ENCODE measurements at regions of chr22 and their contacts with region 1.

Region 1: GRCh38 chr22:31496007-31496734 is at the start of gene SFI1:
- DNase-seq: peak; percentile 96 to 97 (median 96)
- H3K4me3 ChIP-seq: peak within 1 kb of the TSS; percentile 93 to 96
- H3K4me3 Mint-ChIP-seq: peak within 1 kb of the TSS; percentile 87 to 98 (median 91)
- H3K27ac ChIP-seq: peak within 1 kb of the TSS; percentile 89
- H3K27ac Mint-ChIP-seq: peak within 1 kb of the TSS; percentile 94 to 98 (median 97)
- H3K4me1 ChIP-seq: peaks cover 60% of the 10 kb centered on the region
- H3K4me1 Mint-ChIP-seq: peaks cover 23 to 63% (median 32%) of the 10 kb centered on the region in 4 donors
- H3K27me3 ChIP-seq: no peaks in the 10 kb centered on the region
- H3K27me3 Mint-ChIP-seq: no peaks in the 10 kb centered on the region
- total RNA-seq, gene SFI1: 323 to 333 TPM

Region 2: GRCh38 chr22:30767661-30768060 is 728.5 kb before region 1 on chr22:
- CTCF ChIA-PET with region 1: no interaction called
- POLR2A ChIA-PET with region 1: no interaction called
- intact Hi-C with region 1: no loop called
- DNase-seq: no peak
- H3K4me3 ChIP-seq: no peak overlapping the region
- H3K4me3 Mint-ChIP-seq: no peak overlapping the region
- H3K27ac ChIP-seq: no peak overlapping the region
- H3K27ac Mint-ChIP-seq: no peak overlapping the region
- H3K4me1 ChIP-seq: no peaks in the 10 kb centered on the region
- H3K4me1 Mint-ChIP-seq: no peaks in the 10 kb centered on the region
- H3K27me3 ChIP-seq: no peaks in the 10 kb centered on the region
- H3K27me3 Mint-ChIP-seq: no peaks in the 10 kb centered on the region

Region 3: GRCh38 chr22:31399211-31400028 is 96.8 kb before region 1 on chr22 and contains the start of gene DRG1:
- CTCF ChIA-PET with region 1: no interaction called
- POLR2A ChIA-PET with region 1: interaction called, 4 read pairs
- intact Hi-C with region 1: loop called (anchors 2 kb)
- DNase-seq: peak; percentile 93 to 95 (median 94)
- H3K4me3 ChIP-seq: peak within 1 kb of the TSS; percentile 87 to 97
- H3K4me3 Mint-ChIP-seq: peak within 1 kb of the TSS; percentile 95 to 97 (median 96)
- H3K27ac ChIP-seq: peak within 1 kb of the TSS; percentile 92
- H3K27ac Mint-ChIP-seq: peak within 1 kb of the TSS; percentile 90 to 98 (median 96)
- H3K4me1 ChIP-seq: peaks cover 26% of the 10 kb centered on the region
- H3K4me1 Mint-ChIP-seq: peaks cover 16 to 24% (median 20%) of the 10 kb centered on the region in 4 donors
- H3K27me3 ChIP-seq: no peaks in the 10 kb centered on the region
- H3K27me3 Mint-ChIP-seq: peaks cover under 1% of the 10 kb centered on the region in 2 donors
- total RNA-seq, gene DRG1: 80.3 to 82.5 TPM

Region 4: DNA sequence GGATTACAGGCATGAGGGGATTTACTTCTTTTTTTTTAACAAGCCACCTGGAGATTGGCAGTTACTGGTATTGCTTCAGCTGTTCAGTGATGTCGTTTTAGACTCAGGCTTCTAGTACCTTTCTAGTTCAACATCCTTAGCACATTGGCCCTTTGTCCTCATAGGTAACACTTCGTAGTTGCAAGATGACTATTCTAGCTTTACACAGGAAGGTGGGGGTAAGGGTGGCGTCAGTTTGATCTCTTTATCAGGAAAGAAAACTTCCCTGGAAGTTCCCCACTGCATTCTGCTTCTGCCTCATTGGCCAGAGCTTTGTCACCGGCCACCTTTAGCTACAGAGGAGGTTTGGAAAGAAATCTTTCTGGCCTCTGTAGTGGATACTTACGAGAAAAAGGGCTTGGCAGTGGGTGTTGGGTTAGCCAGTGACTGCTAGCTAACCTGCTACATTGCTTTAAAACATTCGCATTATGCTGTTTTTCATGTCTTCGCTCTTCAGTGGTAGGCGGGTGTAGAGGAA is 40.9 kb after region 1 on chr22:
- CTCF ChIA-PET with region 1: interaction called, 4 read pairs
- POLR2A ChIA-PET with region 1: no interaction called
- intact Hi-C with region 1: loop called (anchors 5 kb)
- DNase-seq: no peak
- H3K4me3 ChIP-seq: no peak overlapping the region
- H3K4me3 Mint-ChIP-seq: peak overlapping the region in 3 of 8 donors; percentile 9 to 50 (median 41)
- H3K27ac ChIP-seq: no peak overlapping the region
- H3K27ac Mint-ChIP-seq: peak overlapping the region; percentile 38 to 91 (median 53)
- H3K4me1 ChIP-seq: peaks cover 32% of the 10 kb centered on the region
- H3K4me1 Mint-ChIP-seq: peaks cover 31 to 51% (median 42%) of the 10 kb centered on the region in 4 donors
- H3K27me3 ChIP-seq: no peaks in the 10 kb centered on the region
- H3K27me3 Mint-ChIP-seq: no peaks in the 10 kb centered on the region

Region 5: GRCh38 chr22:31550040-31550439 is 53.9 kb after region 1 on chr22:
- CTCF ChIA-PET with region 1: no interaction called
- POLR2A ChIA-PET with region 1: no interaction called
- intact Hi-C with region 1: no loop called
- DNase-seq: no peak
- H3K4me3 ChIP-seq: no peak overlapping the region
- H3K4me3 Mint-ChIP-seq: no peak overlapping the region
- H3K27ac ChIP-seq: no peak overlapping the region
- H3K27ac Mint-ChIP-seq: peak overlapping the region in 2 of 7 donors; percentile 51 to 72
- H3K4me1 ChIP-seq: peaks cover 15% of the 10 kb centered on the region
- H3K4me1 Mint-ChIP-seq: peaks cover 12 to 27% (median 18%) of the 10 kb centered on the region in 4 donors
- H3K27me3 ChIP-seq: no peaks in the 10 kb centered on the region
- H3K27me3 Mint-ChIP-seq: no peaks in the 10 kb centered on the region

Region 6: DNA sequence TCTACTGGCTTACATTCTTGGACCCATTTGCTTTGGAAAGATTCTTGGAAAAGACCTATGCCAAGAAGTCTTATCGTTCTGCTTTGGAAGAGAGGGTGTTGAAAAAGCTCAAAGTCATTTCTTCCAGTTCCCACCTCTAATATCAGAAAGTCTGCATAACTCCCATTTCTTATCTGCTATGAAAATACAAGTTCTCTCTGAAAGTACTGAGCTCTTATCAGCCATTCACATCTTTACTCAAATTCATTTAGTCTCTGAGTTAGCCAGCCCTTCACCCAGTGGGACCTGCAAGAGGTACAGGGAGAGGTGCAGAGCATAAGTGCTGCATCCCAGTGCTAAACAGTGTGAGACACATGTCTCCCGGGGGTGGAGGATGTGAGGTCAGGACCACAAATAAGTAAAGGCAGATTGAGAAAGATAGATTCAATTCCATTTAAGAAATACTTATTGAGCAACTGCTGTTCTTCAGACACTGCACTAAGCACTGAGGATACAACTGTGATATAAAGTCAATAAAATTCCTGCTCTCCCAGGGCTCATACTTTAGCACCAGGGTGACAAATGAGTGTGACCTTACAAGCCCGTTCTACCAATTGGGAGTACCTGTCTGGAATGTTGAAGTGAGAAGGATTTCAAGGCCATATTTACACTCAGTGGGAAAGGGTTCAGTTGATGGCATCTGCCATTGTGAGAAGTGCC is 89.1 kb after region 1 on chr22:
- CTCF ChIA-PET with region 1: no interaction called
- POLR2A ChIA-PET with region 1: interaction called, 4 read pairs
- intact Hi-C with region 1: loop called (anchors 5 kb)
- DNase-seq: peak in 2 of 5 donors; percentile 6 to 8
- H3K4me3 ChIP-seq: peak overlapping the region in 1 of 2 donors; percentile 19
- H3K4me3 Mint-ChIP-seq: peak overlapping the region in 7 of 8 donors; percentile 17 to 81 (median 67)
- H3K27ac ChIP-seq: peak overlapping the region; percentile 39
- H3K27ac Mint-ChIP-seq: peak overlapping the region; percentile 73 to 94 (median 87)
- H3K4me1 ChIP-seq: peaks cover 56% of the 10 kb centered on the region
- H3K4me1 Mint-ChIP-seq: peaks cover 33 to 47% (median 42%) of the 10 kb centered on the region in 4 donors
- H3K27me3 ChIP-seq: no peaks in the 10 kb centered on the region
- H3K27me3 Mint-ChIP-seq: no peaks in the 10 kb centered on the region

Region 7: GRCh38 chr22:31749636-31750364 is 253.6 kb after region 1 on chr22 and contains the start of gene PRR14L:
- CTCF ChIA-PET with region 1: no interaction called
- POLR2A ChIA-PET with region 1: no interaction called
- intact Hi-C with region 1: loop called (anchors 1 kb)
- DNase-seq: peak; percentile 96 to 99 (median 96)
- H3K4me3 ChIP-seq: peak within 1 kb of the TSS; percentile 24 to 87
- H3K4me3 Mint-ChIP-seq: peak within 1 kb of the TSS; percentile 92 to 100 (median 96)
- H3K27ac ChIP-seq: peak within 1 kb of the TSS; percentile 85
- H3K27ac Mint-ChIP-seq: peak within 1 kb of the TSS; percentile 93 to 97 (median 96)
- H3K4me1 ChIP-seq: peaks cover 48% of the 10 kb centered on the region
- H3K4me1 Mint-ChIP-seq: peaks cover 33 to 70% (median 50%) of the 10 kb centered on the region in 4 donors
- H3K27me3 ChIP-seq: no peaks in the 10 kb centered on the region
- H3K27me3 Mint-ChIP-seq: no peaks in the 10 kb centered on the region
- total RNA-seq, gene PRR14L: 70.7 to 72.6 TPM

Region 8: DNA sequence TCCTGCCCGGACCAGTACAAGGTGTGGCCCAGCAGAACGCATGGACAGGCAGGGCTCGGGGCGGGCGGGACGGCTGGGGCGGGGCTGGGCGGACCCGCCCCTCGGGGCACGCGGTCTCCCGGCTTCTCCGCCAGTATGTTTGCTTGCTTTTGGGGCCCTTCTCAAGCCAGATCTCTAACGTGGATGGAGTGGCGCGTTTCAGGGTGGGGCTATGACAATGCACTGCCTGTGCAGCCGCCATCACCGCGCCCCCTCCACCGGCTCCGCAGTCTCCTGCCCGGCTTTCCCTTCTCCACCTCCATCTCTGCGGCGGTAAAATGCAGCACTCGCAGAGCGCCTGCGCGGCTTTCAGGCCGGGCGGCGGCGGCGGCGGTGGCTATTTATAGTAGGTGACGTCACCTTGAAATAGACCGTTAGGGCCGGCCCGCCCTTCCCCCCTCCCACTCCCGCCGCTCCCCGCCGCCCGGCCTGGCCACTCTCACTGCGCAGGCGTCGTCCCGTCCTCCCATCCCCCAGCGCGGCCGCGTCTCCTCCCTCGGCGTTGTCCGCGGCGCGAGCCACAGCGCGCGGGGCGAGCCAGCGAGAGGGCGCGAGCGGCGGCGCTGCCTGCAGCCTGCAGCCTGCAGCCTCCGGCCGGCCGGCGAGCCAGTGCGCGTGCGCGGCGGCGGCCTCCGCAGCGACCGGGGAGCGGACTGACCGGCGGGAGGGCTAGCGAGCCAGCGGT is 448.0 kb after region 1 on chr22 and contains the start of gene YWHAH:
- CTCF ChIA-PET with region 1: no interaction called
- POLR2A ChIA-PET with region 1: no interaction called
- intact Hi-C with region 1: loop called (anchors 10 kb)
- DNase-seq: peak; percentile 86 to 89 (median 86)
- H3K4me3 ChIP-seq: peak within 1 kb of the TSS; percentile 55 to 67
- H3K4me3 Mint-ChIP-seq: peak within 1 kb of the TSS; percentile 91 to 97 (median 94)
- H3K27ac ChIP-seq: peak within 1 kb of the TSS; percentile 77
- H3K27ac Mint-ChIP-seq: peak within 1 kb of the TSS in 6 of 7 donors; percentile 94 to 98 (median 96)
- H3K4me1 ChIP-seq: peaks cover 33% of the 10 kb centered on the region
- H3K4me1 Mint-ChIP-seq: peaks cover 10 to 25% (median 17%) of the 10 kb centered on the region in 4 donors
- H3K27me3 ChIP-seq: no peaks in the 10 kb centered on the region
- H3K27me3 Mint-ChIP-seq: no peaks in the 10 kb centered on the region
- total RNA-seq, gene YWHAH: 48.0 to 57.0 TPM

Measured in CD4-positive, alpha-beta memory T cell (primary cell).